Mammary epithelial cell (primary cell): ENCODE measurements at regions of chr4 and their contacts with region 1.

Region 1: GRCh38 chr4:182240161-182241130 is 2.8 kb upstream of the TENM3 start:
- DNase-seq: no peak
- H3K4me3 ChIP-seq: no peak overlapping the region
- H3K27ac ChIP-seq: no peak overlapping the region
- H3K4me1 ChIP-seq: peaks cover 38% of the 10 kb centered on the region
- H3K27me3 ChIP-seq: no peaks in the 10 kb centered on the region
- CTCF ChIP-seq: no peak

Region 2: DNA sequence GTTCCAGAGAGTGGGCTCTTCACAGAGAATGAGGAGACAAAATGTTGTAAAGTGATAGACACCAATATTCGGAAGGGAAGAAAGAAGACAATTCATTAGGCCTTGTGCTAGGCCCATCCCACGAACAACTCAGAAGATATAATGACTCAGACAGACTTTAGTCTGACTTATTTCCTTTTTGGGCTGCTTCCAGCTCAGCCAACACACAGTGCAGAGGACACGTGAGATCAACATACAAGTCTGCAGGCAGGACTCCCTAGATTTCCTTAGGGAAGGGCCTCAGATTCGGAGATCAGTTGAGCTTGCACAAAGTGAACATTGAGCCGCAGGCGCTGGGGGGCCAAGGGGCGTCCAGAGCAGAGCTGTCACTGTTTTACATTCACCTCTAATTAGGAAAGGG is 288.0 kb before region 1 on chr4:
- CTCF ChIA-PET with region 1: no interaction called
- dilution Hi-C with region 1: no loop called
- in situ Hi-C with region 1: no loop called
- intact Hi-C with region 1: loop called (anchors 10 kb)
- DNase-seq: peak; percentile 90
- H3K4me3 ChIP-seq: no peak overlapping the region
- H3K27ac ChIP-seq: peak overlapping the region; percentile 62
- H3K4me1 ChIP-seq: peaks cover 28% of the 10 kb centered on the region
- H3K27me3 ChIP-seq: no peaks in the 10 kb centered on the region
- CTCF ChIP-seq: no peak

Region 3: DNA sequence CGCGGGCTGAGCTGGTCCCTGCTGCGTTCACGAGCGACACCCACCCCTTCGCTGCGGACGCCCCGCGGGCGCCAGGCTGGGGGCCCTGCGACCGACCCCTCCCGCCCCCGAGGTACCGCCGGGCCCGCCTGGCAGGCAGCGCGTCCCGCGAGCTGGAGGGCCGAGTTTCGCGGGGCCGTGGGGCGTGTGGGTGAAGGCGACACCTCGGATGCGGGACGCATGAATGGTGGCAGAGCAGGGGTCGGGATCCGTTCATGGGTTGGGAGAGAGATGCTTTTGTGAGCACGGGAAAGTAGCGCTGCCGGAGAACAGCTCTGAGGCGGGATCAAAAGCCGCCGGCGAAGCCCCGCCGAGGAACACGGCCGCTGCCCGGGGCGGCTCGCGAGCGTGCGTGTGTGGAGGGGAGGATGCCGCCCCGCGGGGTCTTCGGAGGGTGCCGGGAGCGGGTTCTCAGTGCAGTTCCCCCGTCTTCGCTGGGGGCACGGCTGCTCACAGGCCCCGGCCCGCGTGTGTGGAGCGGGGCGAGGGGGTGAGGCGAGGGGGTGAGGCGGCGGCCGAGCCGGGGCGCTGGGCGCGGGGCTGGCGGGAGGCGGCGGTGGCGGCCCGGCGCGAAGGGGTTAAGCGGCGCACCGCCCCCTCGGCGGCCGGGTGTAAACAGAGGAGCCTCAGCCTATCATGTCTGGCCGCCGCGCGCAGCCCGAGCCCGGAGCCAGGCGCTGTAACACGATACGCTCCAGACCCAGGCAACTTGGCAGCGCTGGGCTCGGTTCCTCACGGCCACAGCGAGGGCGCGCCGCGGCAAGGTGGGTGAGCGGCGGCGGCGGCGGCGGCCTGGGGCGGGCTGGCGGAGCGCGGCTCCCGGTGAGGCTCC is 208.1 kb after region 1 on chr4:
- CTCF ChIA-PET with region 1: no interaction called
- dilution Hi-C with region 1: no loop called
- in situ Hi-C with region 1: no loop called
- intact Hi-C with region 1: loop called (anchors 10 kb)
- DNase-seq: peak; percentile 89
- H3K4me3 ChIP-seq: peak overlapping the region; percentile 63 to 96 (median 88)
- H3K27ac ChIP-seq: peak overlapping the region; percentile 64
- H3K4me1 ChIP-seq: peaks cover 17% of the 10 kb centered on the region
- H3K27me3 ChIP-seq: no peaks in the 10 kb centered on the region
- CTCF ChIP-seq: no peak